A673 (cell line): ENCODE measurements at regions of chr12 and their contacts with region 1.

Region 1: GRCh38 chr12:24441458-24441857 is 492.0 kb upstream of the SOX5 start:
- DNase-seq: no peak
- H3K4me3 ChIP-seq: no peak overlapping the region
- H3K27ac ChIP-seq: no peak overlapping the region
- H3K4me1 ChIP-seq: peaks cover 39% of the 10 kb centered on the region
- H3K27me3 ChIP-seq: no peaks in the 10 kb centered on the region
- CTCF ChIP-seq: no peak

Region 2: GRCh38 chr12:24393071-24393470 is 48.4 kb before region 1 on chr12:
- CTCF ChIA-PET with region 1: no interaction called
- POLR2A ChIA-PET with region 1: no interaction called
- intact Hi-C with region 1: no loop called
- DNase-seq: no peak
- H3K4me3 ChIP-seq: no peak overlapping the region
- H3K27ac ChIP-seq: no peak overlapping the region
- H3K4me1 ChIP-seq: no peaks in the 10 kb centered on the region
- H3K27me3 ChIP-seq: no peaks in the 10 kb centered on the region
- CTCF ChIP-seq: no peak

Region 3: GRCh38 chr12:24499151-24500146 is 58.0 kb after region 1 on chr12:
- CTCF ChIA-PET with region 1: no interaction called
- POLR2A ChIA-PET with region 1: no interaction called
- intact Hi-C with region 1: no loop called
- DNase-seq: peak; percentile 25
- H3K4me3 ChIP-seq: no peak overlapping the region
- H3K27ac ChIP-seq: peak overlapping the region; percentile 25
- H3K4me1 ChIP-seq: peaks cover 27% of the 10 kb centered on the region
- H3K27me3 ChIP-seq: no peaks in the 10 kb centered on the region
- CTCF ChIP-seq: no peak

Region 4: DNA sequence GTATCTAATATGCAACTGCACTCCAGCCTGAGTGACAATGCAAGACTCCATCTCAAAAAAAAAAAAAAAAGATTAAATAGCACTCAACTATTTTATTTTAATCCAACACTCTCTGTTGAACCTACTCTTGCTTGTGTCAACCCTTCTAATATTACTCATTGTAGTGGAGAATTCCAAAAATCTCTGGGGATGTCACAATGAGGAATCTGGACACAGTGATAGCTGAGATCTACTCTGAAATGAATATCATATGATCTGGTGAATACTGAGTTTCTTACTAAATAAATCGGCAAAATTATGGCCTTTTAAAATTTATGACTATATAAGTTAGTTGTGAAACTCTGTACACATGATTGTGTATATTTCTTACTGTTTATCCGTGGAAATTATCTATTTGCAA is 89.2 kb after region 1 on chr12:
- CTCF ChIA-PET with region 1: interaction called, 11 read pairs
- POLR2A ChIA-PET with region 1: no interaction called
- intact Hi-C with region 1: no loop called
- DNase-seq: no peak
- H3K4me3 ChIP-seq: no peak overlapping the region
- H3K27ac ChIP-seq: no peak overlapping the region
- H3K4me1 ChIP-seq: peaks cover 25% of the 10 kb centered on the region
- H3K27me3 ChIP-seq: no peaks in the 10 kb centered on the region
- CTCF ChIP-seq: no peak